ENCODE measurements at regions of chrX and their contacts with region 1.

Region 1: DNA sequence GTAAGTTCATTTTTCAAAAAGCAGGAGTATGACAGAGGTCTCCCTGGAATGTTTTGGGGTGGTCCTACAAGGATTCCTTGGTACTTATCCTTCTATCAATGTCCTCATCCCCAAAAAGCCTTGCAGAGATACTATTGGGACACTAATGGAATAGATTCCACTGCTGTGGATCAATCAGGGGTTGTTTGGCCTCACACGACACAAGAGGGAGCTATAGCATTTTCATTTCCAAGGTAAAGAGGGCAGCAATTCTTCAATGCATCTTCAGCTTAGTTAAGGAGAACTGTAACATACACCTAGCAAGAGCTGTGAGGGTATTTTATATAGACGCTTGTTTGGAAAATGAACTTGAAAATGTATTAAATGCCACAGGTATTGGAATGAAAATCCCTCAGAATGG is 50.9 kb downstream of the USP26 start:
- DNase-seq: peak; percentile 27
- H3K4me3 Mint-ChIP-seq: no peak overlapping the region
- H3K27ac Mint-ChIP-seq: no peak overlapping the region
- H3K4me1 Mint-ChIP-seq: no peaks in the 10 kb centered on the region
- H3K27me3 Mint-ChIP-seq: no peaks in the 10 kb centered on the region
- CTCF ChIP-seq: peak; percentile 30

Region 2: DNA sequence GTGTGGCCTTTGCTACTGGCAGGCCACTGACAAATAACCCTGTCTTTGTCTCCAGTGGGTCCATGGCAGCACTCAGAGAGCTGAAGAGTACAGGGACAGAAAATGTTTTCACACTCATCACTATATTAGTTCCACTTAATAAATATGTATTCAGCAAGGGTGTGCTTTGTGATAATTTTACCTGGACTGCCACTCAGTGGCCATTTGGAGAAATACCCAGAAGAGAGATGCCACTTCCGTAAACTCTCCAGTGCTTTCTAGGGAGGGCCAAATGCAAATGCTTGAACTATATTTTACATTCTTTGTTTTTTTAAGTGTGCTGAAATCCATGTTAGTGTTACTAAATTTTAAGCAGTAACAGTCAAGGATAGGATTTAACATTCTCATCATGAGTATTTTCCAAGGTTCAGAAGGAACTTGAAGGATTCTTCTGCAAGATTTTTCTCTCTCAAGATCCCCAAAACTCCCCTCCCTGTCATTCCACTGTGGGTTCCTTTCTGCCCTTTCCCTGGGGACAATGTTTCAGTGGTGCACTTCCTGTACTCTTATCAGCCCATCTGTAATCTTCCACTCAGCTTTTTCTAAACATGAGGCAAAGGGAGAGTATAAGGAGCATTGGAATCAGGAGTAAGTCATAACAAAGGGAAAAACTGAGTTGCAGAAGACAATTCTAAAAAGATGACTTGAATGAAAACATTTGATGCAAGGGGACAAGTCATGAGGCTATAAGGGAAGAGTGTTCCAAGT is 126.1 kb after region 1 on chrX:
- CTCF ChIA-PET with region 1: interaction called, 9 read pairs
- intact Hi-C with region 1: loop called (anchors 1 kb)
- DNase-seq: peak; percentile 40
- H3K4me3 Mint-ChIP-seq: no peak overlapping the region
- H3K27ac Mint-ChIP-seq: no peak overlapping the region
- H3K4me1 Mint-ChIP-seq: peaks cover 8% of the 10 kb centered on the region
- H3K27me3 Mint-ChIP-seq: no peaks in the 10 kb centered on the region
- CTCF ChIP-seq: peak; percentile 45

Region 3: DNA sequence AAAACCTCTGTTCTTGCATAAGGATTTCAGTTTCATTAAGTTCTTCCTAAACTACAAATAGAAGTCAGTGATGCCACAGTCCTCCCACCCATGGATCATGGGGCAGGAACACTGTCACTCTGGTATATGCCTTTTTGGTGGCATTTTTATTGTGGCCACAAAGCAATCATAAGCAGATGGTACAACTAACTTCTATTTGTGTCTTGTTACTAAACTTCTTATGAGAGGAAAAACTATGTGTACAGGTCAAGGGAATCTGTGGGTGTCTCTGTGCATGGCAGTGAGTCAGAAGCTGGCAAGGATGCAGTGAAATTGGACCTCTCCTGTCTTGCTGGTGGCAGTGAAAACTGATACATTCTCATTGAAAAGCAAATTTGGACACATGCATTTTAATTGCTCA is 614.3 kb after region 1 on chrX:
- CTCF ChIA-PET with region 1: no interaction called
- intact Hi-C with region 1: no loop called
- DNase-seq: no peak
- H3K4me3 Mint-ChIP-seq: no peak overlapping the region
- H3K27ac Mint-ChIP-seq: no peak overlapping the region
- H3K4me1 Mint-ChIP-seq: peaks cover 51% of the 10 kb centered on the region
- H3K27me3 Mint-ChIP-seq: no peaks in the 10 kb centered on the region
- CTCF ChIP-seq: no peak

Measured in Calu3 (cell line).